Upper lobe of right lung (tissue), 1 donor: ENCODE measurements at regions of chr22 and their contacts with region 1.

Region 1: GRCh38 chr22:49770822-49771265 is 56.8 kb downstream of the BRD1 start:
- DNase-seq: no peak
- ATAC-seq: no peak
- H3K4me3 ChIP-seq: no peak overlapping the region
- H3K27ac ChIP-seq: no peak overlapping the region
- H3K4me1 ChIP-seq: no peaks in the 10 kb centered on the region
- H3K27me3 ChIP-seq: no peaks in the 10 kb centered on the region
- CTCF ChIP-seq: no peak

Region 2: DNA sequence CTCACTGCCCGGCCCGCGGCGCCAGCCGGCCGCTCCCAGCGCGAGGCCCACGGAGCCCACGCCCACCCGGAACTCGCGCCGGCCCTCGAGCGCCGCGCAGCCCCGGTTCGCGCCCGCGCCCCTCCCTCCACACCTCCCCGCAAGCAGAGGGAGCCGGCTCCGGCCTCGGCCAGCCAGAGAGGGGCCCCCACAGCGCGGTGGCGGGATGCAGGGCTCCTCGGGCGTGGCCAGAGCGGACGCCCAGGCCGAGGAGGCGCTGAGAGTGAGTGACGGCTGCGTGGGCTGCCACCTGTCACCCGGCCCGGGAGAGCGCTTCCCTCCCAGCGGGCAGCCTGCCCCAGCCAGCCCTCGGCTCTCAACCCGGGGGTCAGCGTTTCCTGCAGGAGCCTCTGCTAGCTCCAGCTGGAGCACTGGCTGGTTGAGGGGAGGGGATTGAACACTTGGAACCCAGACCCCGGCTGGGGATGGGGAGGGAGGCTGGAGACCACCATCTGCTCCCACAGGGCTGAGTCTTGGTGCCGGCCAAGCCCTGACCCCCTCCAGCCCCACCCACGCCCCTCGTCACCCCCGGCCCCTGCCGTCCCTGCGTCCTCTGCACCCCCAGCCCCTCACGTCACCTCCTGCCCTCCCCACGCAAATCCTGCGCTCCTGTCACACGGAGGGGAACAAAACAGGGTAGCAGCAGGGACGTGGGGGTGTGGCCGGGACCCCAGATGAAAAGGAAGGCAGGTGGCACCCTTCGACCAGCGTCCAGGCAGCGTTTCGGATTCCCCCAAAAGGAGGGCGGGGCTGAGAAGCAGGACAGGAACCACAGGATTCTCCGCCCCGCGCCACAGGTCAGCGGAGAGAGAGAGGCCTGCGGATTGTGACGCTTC is 100.2 kb before region 1 on chr22:
- intact Hi-C with region 1: no loop called
- DNase-seq: peak; percentile 75
- ATAC-seq: peak; percentile 76
- H3K4me3 ChIP-seq: peak overlapping the region; percentile 36
- H3K27ac ChIP-seq: no peak overlapping the region
- H3K4me1 ChIP-seq: peaks cover 5% of the 10 kb centered on the region
- H3K27me3 ChIP-seq: peaks cover 32% of the 10 kb centered on the region
- CTCF ChIP-seq: no peak

Region 3: DNA sequence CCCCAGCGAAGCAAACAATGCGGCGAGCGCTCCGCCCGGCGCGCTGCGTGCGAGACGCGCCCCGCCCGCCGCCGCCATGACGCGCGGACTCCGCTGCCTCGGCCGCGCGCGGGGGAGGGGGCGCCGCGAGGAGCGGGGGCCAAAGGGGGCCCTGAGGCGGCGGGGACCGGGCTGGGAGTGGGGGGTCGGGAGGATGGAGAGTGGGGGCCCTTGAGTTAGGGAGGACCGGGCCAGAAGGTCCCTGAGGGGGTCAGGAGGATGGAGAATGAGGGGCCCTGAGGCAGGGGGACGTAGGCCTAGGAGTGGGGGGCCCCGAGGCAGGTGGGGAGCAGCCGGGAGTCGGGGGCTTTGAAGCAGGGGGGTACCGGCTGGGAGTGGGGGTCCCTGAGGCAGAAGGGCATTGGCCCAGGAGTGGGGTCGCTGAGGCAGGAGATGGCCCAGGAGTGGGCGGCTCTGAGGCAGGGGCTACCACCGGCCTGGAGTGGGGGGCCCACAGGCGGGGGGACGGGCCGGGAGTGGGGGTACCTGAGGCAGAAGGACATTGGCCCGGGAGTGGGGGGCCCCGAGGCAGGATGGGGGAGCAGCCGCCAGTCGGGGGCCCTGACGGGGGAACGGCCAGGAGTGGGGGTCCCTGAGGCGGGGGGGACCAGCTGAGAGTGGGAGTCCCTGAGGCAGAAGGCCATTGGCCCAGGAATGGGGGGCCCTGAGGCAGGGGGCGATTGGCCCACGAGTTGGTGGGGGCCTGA is 57.2 kb after region 1 on chr22 and contains the start of gene BRD1:
- intact Hi-C with region 1: loop called (anchors 10 kb)
- DNase-seq: peak; percentile 82
- ATAC-seq: peak; percentile 83
- H3K4me3 ChIP-seq: peak within 1 kb of the TSS; percentile 88
- H3K27ac ChIP-seq: peak within 1 kb of the TSS; percentile 88
- H3K4me1 ChIP-seq: peaks cover 22% of the 10 kb centered on the region
- H3K27me3 ChIP-seq: no peaks in the 10 kb centered on the region
- CTCF ChIP-seq: no peak
- total RNA-seq, gene BRD1: 39.0 TPM

Region 4: DNA sequence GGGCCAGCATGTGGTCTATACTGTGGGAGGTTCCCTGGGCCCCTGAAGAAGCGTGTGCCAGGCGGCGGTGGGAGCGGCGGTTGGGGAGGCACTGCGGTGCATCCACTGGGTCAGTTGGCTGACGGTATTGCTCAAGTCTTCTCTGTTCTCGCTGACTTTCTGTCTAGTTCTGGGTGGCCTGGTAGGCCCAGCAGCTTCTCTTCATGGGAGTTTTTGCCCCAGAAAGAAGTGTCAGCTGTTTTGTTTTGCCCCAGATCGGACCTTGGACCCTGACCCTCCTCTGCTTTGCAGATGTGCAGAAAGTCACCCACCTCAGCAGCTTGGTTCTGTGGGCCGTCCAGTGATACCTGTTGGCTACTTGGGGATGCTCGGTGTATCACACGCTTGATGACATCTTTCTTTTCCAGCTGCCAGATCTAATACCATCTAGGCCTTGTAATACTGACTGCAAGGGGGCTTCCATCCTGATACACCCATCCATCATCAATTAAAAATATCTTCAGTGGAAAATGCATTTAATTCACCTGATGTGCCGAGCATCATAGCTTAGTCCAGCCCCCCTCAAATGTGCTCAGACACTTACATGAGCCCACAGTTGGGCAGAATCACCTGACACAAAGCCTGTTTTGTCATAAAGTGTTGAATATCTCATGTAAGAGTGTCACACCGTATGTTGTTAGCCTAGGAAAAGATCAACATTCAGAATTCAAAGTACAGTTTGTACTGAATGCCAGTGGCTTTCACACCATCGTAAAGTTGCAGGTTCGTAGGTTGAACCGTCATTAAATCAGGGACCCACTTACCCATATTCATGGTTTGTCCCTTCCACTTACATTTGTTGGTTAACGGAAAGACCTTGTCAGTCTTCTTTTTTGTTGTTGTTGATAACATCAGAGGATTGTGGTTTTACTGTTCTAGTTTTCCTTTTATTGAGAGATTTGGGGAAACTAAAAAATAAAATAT is 96.7 kb after region 1 on chr22:
- intact Hi-C with region 1: no loop called
- DNase-seq: peak; percentile 34
- ATAC-seq: peak; percentile 35
- H3K4me3 ChIP-seq: no peak overlapping the region
- H3K27ac ChIP-seq: peak overlapping the region; percentile 14
- H3K4me1 ChIP-seq: peaks cover 3% of the 10 kb centered on the region
- H3K27me3 ChIP-seq: no peaks in the 10 kb centered on the region
- CTCF ChIP-seq: no peak